ENCODE measurements at regions of chr9 and their contacts with region 1.

Region 1: DNA sequence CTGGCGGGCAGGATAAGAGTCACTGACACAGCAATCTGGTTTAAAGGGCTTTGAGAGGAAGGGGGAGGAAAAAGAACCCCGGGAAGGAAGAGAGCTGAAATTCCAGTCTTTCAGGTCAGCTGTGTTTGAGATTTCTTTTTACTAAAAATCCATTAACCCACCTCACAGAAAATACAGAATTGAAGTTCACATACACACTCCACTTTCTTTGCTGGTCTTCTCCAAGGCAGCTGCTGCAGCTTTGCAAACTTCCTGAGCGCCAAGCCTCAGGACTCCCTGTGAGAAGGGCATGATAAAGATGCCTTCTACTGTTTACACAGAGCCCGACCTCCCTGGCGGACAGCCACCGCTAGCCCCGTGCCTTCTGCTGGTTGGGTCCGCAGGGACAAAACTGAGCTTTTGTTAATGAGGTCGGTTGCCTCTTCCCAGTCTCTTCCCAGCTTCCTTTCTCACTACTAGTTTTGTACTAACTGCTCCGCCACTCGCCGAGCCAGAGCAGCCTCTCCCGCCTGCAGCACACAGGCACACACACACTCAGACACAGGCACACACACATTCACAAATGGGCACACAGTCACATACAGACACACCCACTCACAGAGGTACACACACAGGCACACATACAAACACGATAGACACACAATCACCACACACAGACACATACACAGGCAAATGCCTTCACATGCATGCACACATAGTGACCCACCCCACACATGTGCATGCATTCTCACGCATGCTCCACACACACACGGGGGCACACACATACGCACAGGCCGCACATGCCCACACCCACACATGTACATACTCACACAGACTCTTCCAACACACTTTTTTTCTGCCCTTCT is at the start of gene FREM1:
- DNase-seq: peak; percentile 23
- total RNA-seq, gene FREM1: 0.24 TPM in 1 of 2 replicates, not detected in the other

Region 2: DNA sequence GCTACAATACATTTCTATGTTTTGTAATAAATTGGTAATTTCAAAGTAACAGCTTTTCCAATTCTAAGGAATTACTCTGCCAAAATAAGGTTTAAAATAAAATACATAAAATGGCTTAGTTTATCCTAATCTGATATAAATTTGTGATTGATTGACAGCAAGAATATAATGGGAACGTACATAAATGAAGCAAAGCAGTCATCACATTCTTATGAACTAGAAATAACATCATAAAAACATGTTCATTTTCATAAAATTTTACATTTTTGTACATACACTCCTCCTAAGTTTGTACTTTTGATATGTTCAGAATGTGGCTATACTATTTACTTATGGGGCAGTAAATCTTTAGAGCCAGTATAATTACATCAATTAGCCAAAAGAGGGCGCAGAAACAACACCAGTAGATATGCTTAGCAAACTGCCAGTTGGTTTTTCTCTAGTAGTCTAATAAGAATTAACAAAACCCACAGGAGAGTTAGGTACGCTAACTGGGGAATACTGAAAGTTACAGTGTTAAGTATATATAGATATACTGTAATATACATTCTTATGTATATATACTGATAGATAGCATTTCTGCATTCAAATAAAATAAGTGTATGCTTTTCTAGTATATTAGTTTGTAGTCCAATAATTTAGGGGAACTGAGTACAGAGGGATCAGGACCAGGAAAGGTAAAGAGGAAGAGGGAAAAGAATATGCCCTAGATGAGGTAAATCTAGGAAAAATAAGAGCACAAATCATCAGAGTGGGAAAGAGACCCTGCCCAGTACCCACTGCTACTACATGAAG is 293.8 kb before region 1 on chr9:
- in situ Hi-C with region 1: loop called (anchors 25 kb)
- DNase-seq: peak; percentile 66

Region 3: DNA sequence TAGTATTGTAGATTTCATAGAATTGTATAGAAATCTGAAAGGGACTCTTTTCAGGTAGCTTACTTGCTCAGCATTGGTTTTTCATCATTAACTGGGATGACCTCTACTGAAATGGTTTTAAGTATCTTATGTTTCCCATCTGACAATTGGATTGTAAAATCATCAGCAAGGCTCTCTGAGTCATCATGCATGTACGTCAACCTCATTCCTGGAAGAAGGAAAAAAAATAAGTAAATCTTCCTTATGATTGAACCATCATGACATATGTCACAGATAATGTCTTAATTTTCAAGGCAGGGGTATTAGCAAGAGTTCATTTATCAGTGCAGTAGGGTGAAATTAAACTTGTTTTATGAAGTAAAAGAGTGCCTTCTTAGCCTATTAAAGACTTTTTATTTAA is 112.7 kb before region 1 on chr9:
- in situ Hi-C with region 1: no loop called
- DNase-seq: peak; percentile 4

Region 4: GRCh38 chr9:14945351-14945750 is 35.2 kb after region 1 on chr9:
- in situ Hi-C with region 1: no loop called
- DNase-seq: no peak

Region 5: DNA sequence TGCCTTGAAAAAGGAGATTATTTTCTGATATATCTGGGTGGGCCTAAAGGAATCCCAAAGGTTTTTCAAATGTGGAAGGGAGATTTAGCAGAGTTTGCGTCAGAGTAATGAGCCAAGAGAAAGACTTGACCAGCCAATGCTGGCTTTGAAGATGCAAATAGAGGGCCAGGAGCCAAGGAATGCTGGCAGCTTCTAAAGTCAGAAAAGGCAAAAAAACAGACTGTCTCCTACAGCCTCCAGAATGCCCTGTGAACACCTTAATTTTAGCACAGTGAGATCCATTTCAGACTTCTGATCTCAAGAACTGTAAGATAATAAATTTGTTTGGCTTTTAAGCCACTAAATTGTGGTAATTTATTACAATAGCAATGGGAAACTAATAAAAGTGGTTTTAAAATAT is 122.7 kb after region 1 on chr9:
- in situ Hi-C with region 1: no loop called
- DNase-seq: no peak

Region 6: DNA sequence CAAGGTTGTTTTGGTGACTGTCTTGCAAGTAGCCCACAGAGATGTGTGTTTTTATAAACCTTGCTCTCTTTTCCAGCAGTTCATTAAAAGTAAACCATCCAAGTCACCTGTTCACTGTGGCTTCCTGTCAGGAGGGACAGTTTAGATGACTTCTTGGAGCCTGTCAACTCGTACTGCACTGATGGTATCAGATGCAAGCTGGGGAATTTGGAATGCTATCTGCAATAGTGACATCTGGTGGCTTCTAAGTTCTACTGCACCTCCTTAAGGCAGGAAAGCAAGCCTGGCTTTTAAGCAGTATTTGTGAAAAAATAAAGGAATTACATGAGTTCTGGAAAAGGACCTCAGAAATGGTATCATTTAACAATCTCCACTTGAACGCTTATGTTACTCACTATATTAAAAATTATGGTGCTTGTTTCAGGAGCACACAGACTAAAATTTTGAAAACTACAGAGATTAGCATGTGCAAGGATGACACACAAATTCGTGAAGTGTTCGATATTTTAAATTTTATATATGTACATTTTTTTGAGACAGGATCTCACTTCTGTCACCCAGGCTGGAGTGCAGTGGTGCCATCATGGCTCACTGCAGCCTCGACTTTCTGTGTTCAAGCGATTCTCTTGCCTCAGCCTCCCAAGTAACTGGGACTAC is 232.8 kb after region 1 on chr9:
- in situ Hi-C with region 1: no loop called
- DNase-seq: peak; percentile 61